PC-9 (cell line): ENCODE measurements at regions of chr13 and their contacts with region 1.

Region 1: GRCh38 chr13:20311596-20311995 is 79.5 kb upstream of the GJB6 start:
- DNase-seq: no peak
- H3K4me3 ChIP-seq: no peak overlapping the region
- H3K27ac ChIP-seq: no peak overlapping the region
- H3K4me1 ChIP-seq: no peaks in the 10 kb centered on the region
- H3K27me3 ChIP-seq: no peaks in the 10 kb centered on the region
- CTCF ChIP-seq: no peak

Region 2: GRCh38 chr13:20136781-20137703 is 174.6 kb before region 1 on chr13:
- CTCF ChIA-PET with region 1: no interaction called
- POLR2A ChIA-PET with region 1: no interaction called
- intact Hi-C with region 1: no loop called
- DNase-seq: peak in 1 of 2 experiments; percentile 32
- H3K4me3 ChIP-seq: 0 out of 2 replicates have a peak overlapping the region, but pooled peaks have one; percentile 11
- H3K27ac ChIP-seq: no peak overlapping the region
- H3K4me1 ChIP-seq: no peaks in the 10 kb centered on the region
- H3K27me3 ChIP-seq: no peaks in the 10 kb centered on the region
- CTCF ChIP-seq: no peak

Region 3: DNA sequence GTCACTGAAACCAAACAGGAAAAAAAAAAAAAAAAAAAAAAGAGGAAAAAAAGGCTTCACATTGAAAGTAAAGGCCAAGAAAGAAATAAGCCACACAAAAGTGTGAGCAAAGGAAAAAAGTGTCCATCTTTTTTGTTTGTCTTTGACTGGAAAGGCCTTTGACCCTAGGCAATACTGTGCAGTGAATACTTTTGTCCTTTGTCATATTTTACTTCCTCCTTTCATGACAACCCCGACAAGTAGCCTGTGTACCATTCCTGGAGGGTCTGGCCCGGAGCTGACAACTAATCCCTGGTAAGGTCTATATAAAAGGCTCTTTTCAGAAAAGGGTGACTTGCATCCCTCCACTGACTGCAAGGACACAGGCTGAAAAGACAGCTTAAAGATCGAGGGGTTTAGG is 1305.3 kb after region 1 on chr13:
- CTCF ChIA-PET with region 1: no interaction called
- POLR2A ChIA-PET with region 1: interaction called, 10 read pairs
- intact Hi-C with region 1: no loop called
- DNase-seq: no peak
- H3K4me3 ChIP-seq: no peak overlapping the region
- H3K27ac ChIP-seq: no peak overlapping the region
- H3K4me1 ChIP-seq: no peaks in the 10 kb centered on the region
- H3K27me3 ChIP-seq: peaks cover 86% of the 10 kb centered on the region
- CTCF ChIP-seq: no peak